CD4-positive, alpha-beta T cell (primary cell): ENCODE measurements at regions of chr9 and their contacts with region 1.

Region 1: GRCh38 chr9:120868676-120869359 is 8.2 kb downstream of the PHF19 start:
- DNase-seq: peak; percentile 95 to 99 (median 97)
- ATAC-seq: peak; percentile 84
- H3K4me3 ChIP-seq: peak overlapping the region; percentile 73
- H3K4me3 Mint-ChIP-seq: peak overlapping the region; percentile 94
- H3K27ac ChIP-seq: peak overlapping the region; percentile 71 to 80
- H3K27ac Mint-ChIP-seq: peak overlapping the region; percentile 92
- H3K4me1 ChIP-seq: peaks cover 42% of the 10 kb centered on the region
- H3K4me1 Mint-ChIP-seq: peaks cover 29% of the 10 kb centered on the region
- H3K27me3 ChIP-seq: no peaks in the 10 kb centered on the region
- H3K27me3 Mint-ChIP-seq: no peaks in the 10 kb centered on the region
- CTCF ChIP-seq: peak; percentile 72

Region 2: DNA sequence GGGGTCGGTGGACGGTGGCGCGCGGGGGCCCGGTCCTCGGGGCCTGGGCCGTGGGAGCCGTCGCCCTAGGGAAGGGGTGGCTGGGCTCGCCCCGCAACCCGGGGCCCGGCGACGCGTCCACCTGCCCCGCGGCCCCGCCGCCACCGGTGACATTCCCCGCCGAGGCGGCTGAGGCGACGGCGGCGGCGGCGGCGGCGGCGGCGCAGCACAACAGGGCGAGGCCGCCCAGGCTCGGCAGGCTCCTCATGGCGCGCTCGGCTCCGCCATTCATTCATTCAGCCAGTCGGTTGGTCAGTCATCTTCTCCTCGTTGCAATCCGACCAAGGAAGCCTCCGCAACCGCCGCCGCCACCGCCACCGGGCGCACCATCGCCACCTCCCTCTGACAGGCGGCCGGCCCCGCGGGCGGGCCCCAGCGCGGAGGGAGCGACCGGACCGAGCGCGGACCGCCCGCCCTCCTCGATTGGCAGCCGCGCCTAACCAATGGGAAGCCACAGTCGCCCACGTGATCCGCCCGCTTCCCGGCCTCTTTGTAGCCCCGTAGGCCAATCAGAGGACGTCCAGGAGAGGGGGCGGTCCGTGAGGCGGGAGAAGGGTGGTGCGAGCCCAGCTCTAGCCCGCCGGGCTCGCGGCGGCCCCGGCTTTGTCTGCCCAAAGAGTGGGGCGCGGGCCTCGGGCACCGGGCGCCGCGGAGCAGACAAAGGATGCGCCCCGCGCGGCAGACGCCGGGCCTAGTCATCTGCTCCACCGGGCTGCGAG is 154.6 kb before region 1 on chr9 and contains the start of gene MEGF9:
- CTCF ChIA-PET with region 1: no interaction called
- POLR2A ChIA-PET with region 1: no interaction called
- intact Hi-C with region 1: loop called in 1 of 2 experiments (anchors 2 kb)
- DNase-seq: peak; percentile 88 to 98 (median 94)
- ATAC-seq: peak; percentile 93
- H3K4me3 ChIP-seq: peak within 1 kb of the TSS; percentile 82
- H3K4me3 Mint-ChIP-seq: peak within 1 kb of the TSS; percentile 90
- H3K27ac ChIP-seq: peak within 1 kb of the TSS; percentile 56 to 60
- H3K27ac Mint-ChIP-seq: peak within 1 kb of the TSS; percentile 79
- H3K4me1 ChIP-seq: peaks cover 35% of the 10 kb centered on the region
- H3K4me1 Mint-ChIP-seq: peaks cover 39% of the 10 kb centered on the region
- H3K27me3 ChIP-seq: no peaks in the 10 kb centered on the region
- H3K27me3 Mint-ChIP-seq: no peaks in the 10 kb centered on the region
- CTCF ChIP-seq: no peak
- total RNA-seq, gene MEGF9: 4.0 to 4.5 TPM

Region 3: DNA sequence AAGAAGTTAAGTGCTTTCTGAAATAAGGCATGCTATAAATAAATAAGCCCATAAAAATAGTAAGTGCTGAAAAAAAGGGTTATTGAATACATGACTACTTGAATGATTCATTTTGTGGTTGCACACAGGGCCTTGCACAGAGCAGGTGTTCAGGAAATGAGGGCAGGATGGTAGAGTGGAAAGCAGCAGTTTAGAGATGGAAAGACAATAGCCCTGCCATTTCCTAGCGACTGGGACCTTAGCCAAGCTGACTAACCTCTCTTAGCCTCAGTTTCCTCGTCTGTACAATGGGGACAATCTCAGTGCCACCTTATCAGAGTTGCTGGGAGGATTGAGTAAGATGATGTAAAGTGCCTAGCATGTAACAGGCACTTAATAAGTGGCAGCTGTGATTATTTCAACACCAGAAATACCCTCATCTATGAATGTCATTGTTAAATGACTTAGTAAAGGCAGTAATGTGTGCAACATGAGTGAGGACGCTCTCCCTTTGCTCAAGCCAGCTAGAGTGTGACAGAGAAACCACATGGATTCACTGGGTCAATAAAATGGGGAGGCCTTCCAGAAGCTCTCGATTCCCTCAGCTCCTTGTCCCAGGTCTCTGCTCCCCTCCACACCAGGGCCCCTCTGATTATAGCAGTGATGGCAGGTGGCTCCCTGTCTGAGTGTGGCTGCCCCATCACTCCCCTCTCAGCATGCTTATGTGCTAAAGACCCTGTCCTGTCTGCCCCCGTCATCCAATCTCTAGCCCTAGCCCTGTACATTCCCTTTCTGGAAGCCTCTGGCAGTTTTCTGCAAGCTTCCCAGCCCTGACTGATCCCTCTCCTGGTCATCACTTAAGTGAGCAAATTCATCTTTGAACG is 24.2 kb after region 1 on chr9:
- CTCF ChIA-PET with region 1: interaction called, 18 read pairs
- POLR2A ChIA-PET with region 1: interaction called, 327 read pairs
- intact Hi-C with region 1: no loop called
- DNase-seq: peak in 13 of 14 experiments; percentile 50 to 89 (median 59)
- ATAC-seq: peak; percentile 55
- H3K4me3 ChIP-seq: no peak overlapping the region
- H3K4me3 Mint-ChIP-seq: peak overlapping the region; percentile 28
- H3K27ac ChIP-seq: peak overlapping the region; percentile 86 to 88
- H3K27ac Mint-ChIP-seq: peak overlapping the region; percentile 98
- H3K4me1 ChIP-seq: peaks cover 96% of the 10 kb centered on the region
- H3K4me1 Mint-ChIP-seq: peaks cover 77% of the 10 kb centered on the region
- H3K27me3 ChIP-seq: no peaks in the 10 kb centered on the region
- H3K27me3 Mint-ChIP-seq: no peaks in the 10 kb centered on the region
- CTCF ChIP-seq: no peak

Region 4: DNA sequence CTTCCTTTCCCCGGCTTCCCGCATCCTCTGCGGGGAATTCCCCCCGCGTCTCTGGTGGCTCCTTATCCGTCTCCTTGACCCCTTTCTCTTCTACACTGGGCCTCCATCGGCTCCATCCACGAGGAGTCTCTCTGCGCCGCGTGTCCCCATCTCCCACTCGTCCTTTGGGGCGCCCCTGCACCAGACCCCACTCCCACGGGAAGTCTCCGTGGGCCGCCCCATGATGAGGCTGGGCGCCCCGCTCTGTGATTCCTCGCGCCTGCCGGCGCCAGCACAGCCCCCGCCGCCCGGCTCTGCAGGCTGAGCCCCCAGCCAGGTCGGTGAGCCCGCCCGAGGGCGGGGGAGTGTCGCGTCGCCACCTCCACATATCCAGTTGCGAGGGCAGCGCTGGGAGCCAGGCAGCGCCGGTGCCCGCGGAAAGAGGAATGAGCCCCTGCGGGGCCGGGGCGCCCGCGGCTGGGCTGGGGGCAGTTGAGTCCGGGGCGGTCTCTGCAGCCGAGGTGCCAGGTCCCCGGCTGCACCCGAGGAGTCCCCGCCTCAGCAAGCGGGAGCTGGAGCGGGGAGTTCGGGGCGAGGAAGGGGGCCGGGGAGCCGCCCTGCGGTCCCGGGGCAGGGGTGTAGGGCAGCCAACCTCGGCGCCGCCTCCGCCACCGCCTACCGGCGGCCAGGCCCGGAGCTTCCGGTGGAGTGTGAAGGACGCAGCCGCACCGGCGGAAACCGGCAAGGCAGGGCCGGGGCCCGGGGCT is 59.8 kb after region 1 on chr9:
- CTCF ChIA-PET with region 1: interaction called, 6 read pairs
- POLR2A ChIA-PET with region 1: interaction called, 284 read pairs
- intact Hi-C with region 1: no loop called
- DNase-seq: peak; percentile 58 to 90 (median 78)
- ATAC-seq: peak; percentile 39
- H3K4me3 ChIP-seq: peak overlapping the region; percentile 90
- H3K4me3 Mint-ChIP-seq: peak overlapping the region; percentile 88
- H3K27ac ChIP-seq: peak overlapping the region; percentile 98 to 100
- H3K27ac Mint-ChIP-seq: peak overlapping the region; percentile 100
- H3K4me1 ChIP-seq: peaks cover 90% of the 10 kb centered on the region
- H3K4me1 Mint-ChIP-seq: peaks cover 91% of the 10 kb centered on the region
- H3K27me3 ChIP-seq: no peaks in the 10 kb centered on the region
- H3K27me3 Mint-ChIP-seq: no peaks in the 10 kb centered on the region
- CTCF ChIP-seq: no peak

Region 5: GRCh38 chr9:121059998-121060636 is 191.3 kb after region 1 on chr9:
- CTCF ChIA-PET with region 1: interaction called, 5 read pairs
- POLR2A ChIA-PET with region 1: no interaction called
- intact Hi-C with region 1: loop called (anchors 1 to 5 kb)
- DNase-seq: peak in 7 of 14 experiments; percentile 9 to 76 (median 59)
- ATAC-seq: no peak
- H3K4me3 ChIP-seq: no peak overlapping the region
- H3K4me3 Mint-ChIP-seq: no peak overlapping the region
- H3K27ac ChIP-seq: no peak overlapping the region
- H3K27ac Mint-ChIP-seq: no peak overlapping the region
- H3K4me1 ChIP-seq: peaks cover 5% of the 10 kb centered on the region
- H3K4me1 Mint-ChIP-seq: peaks cover 18% of the 10 kb centered on the region
- H3K27me3 ChIP-seq: no peaks in the 10 kb centered on the region
- H3K27me3 Mint-ChIP-seq: no peaks in the 10 kb centered on the region
- CTCF ChIP-seq: peak; percentile 77